B cell (primary cell): ENCODE measurements at regions of chr12 and their contacts with region 1.

Region 1: GRCh38 chr12:98572010-98572409 is 21.5 kb upstream of the SLC25A3 start:
- DNase-seq: no peak
- ATAC-seq: no peak
- H3K4me3 ChIP-seq: no peak overlapping the region
- H3K4me3 Mint-ChIP-seq: no peak overlapping the region
- H3K27ac ChIP-seq: no peak overlapping the region
- H3K27ac Mint-ChIP-seq: no peak overlapping the region
- H3K4me1 ChIP-seq: no peaks in the 10 kb centered on the region
- H3K4me1 Mint-ChIP-seq: no peaks in the 10 kb centered on the region
- H3K27me3 ChIP-seq: no peaks in the 10 kb centered on the region
- H3K27me3 Mint-ChIP-seq: peaks cover 3% of the 10 kb centered on the region
- CTCF ChIP-seq: peak; percentile 12

Region 2: GRCh38 chr12:98274430-98275130 is 297.4 kb before region 1 on chr12:
- CTCF ChIA-PET with region 1: no interaction called
- POLR2A ChIA-PET with region 1: no interaction called
- intact Hi-C with region 1: no loop called
- DNase-seq: no peak
- ATAC-seq: no peak
- H3K4me3 ChIP-seq: no peak overlapping the region
- H3K4me3 Mint-ChIP-seq: no peak overlapping the region
- H3K27ac ChIP-seq: no peak overlapping the region
- H3K27ac Mint-ChIP-seq: no peak overlapping the region
- H3K4me1 ChIP-seq: no peaks in the 10 kb centered on the region
- H3K4me1 Mint-ChIP-seq: no peaks in the 10 kb centered on the region
- H3K27me3 ChIP-seq: no peaks in the 10 kb centered on the region
- H3K27me3 Mint-ChIP-seq: peaks cover 6% of the 10 kb centered on the region
- CTCF ChIP-seq: no peak

Region 3: DNA sequence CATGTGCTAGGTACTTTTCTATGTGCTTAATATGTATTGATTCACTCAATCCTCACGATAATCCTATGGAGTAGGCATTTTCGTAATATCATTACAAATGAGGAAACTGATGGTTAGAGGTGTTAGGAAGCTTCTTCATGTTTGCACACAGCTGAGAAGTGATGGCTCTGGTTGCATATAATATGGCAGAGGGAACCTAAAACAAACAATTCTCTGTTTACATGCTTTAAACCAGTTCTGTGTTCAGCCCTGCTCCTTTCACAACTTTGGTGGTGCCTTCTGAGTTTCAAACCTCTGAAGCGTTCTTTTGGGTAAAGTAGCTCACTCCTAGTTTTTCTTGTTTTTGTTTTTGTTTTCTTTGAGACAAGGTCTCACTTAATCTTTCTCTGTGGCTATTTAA is 21.2 kb before region 1 on chr12:
- CTCF ChIA-PET with region 1: interaction called, 13 read pairs
- POLR2A ChIA-PET with region 1: no interaction called
- intact Hi-C with region 1: no loop called
- DNase-seq: no peak
- ATAC-seq: no peak
- H3K4me3 ChIP-seq: no peak overlapping the region
- H3K4me3 Mint-ChIP-seq: no peak overlapping the region
- H3K27ac ChIP-seq: no peak overlapping the region
- H3K27ac Mint-ChIP-seq: no peak overlapping the region
- H3K4me1 ChIP-seq: no peaks in the 10 kb centered on the region
- H3K4me1 Mint-ChIP-seq: no peaks in the 10 kb centered on the region
- H3K27me3 ChIP-seq: no peaks in the 10 kb centered on the region
- H3K27me3 Mint-ChIP-seq: no peaks in the 10 kb centered on the region
- CTCF ChIP-seq: no peak

Region 4: DNA sequence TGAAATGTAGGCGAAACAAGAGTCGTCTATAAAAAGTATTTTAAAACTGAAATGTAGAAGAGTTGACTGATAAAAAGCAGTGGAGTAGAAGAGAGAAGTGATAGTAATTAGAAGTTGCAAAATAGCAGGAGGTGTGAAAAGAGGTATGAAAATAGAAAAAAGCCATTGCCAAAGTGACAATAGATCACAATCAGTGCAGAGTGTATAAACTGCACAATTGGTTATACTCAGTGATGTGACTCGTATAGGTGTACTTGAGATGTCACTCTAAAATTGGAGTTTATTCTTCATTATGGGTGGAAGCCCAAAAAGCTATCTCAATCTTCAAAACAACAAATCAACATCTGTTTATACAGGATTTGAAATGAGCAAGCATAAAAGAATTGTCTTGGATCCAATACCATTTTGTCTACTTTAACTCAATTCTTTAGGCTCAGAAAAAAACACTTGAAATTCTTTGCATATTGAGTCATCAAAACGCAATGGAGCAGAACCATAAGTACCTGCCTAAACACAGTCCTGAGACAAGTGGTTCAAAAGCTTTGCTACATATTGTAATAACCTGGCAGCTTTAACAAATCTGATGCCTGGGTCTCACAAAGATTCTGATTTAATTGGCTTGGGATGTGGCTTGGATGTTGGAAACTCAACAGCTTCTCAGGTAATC is 63.8 kb after region 1 on chr12:
- CTCF ChIA-PET with region 1: interaction called, 15 read pairs
- POLR2A ChIA-PET with region 1: interaction called, 3 read pairs
- intact Hi-C with region 1: no loop called
- DNase-seq: peak; percentile 24
- ATAC-seq: peak; percentile 80
- H3K4me3 ChIP-seq: no peak overlapping the region
- H3K4me3 Mint-ChIP-seq: no peak overlapping the region
- H3K27ac ChIP-seq: no peak overlapping the region
- H3K27ac Mint-ChIP-seq: peak overlapping the region; percentile 32
- H3K4me1 ChIP-seq: peaks cover 8 to 10% of the 10 kb centered on the region in 2 donors
- H3K4me1 Mint-ChIP-seq: peaks cover 20% of the 10 kb centered on the region
- H3K27me3 ChIP-seq: no peaks in the 10 kb centered on the region
- H3K27me3 Mint-ChIP-seq: no peaks in the 10 kb centered on the region
- CTCF ChIP-seq: no peak